AG04449 (cell line): ENCODE measurements at regions of chr9 and their contacts with region 1.

Region 1: GRCh38 chr9:37732086-37732741 is 21.4 kb upstream of the TRMT10B start:
- DNase-seq: no peak
- H3K4me3 ChIP-seq: no peak overlapping the region
- CTCF ChIP-seq: no peak

Region 2: GRCh38 chr9:37617832-37618231 is 114.4 kb before region 1 on chr9:
- CTCF ChIA-PET with region 1: no interaction called
- POLR2A ChIA-PET with region 1: no interaction called
- DNase-seq: peak; percentile 33
- H3K4me3 ChIP-seq: no peak overlapping the region
- CTCF ChIP-seq: no peak

Region 3: GRCh38 chr9:37676411-37676830 is 55.8 kb before region 1 on chr9:
- CTCF ChIA-PET with region 1: no interaction called
- POLR2A ChIA-PET with region 1: no interaction called
- DNase-seq: no peak
- H3K4me3 ChIP-seq: no peak overlapping the region
- CTCF ChIP-seq: no peak

Region 4: GRCh38 chr9:37746848-37747753 is 14.9 kb after region 1 on chr9:
- CTCF ChIA-PET with region 1: interaction called, 13 read pairs
- POLR2A ChIA-PET with region 1: no interaction called
- DNase-seq: peak; percentile 26
- H3K4me3 ChIP-seq: no peak overlapping the region
- CTCF ChIP-seq: peak; percentile 90